Heart right ventricle (tissue), 16 donors: ENCODE measurements at regions of chr2 and their contacts with region 1.

Region 1: DNA sequence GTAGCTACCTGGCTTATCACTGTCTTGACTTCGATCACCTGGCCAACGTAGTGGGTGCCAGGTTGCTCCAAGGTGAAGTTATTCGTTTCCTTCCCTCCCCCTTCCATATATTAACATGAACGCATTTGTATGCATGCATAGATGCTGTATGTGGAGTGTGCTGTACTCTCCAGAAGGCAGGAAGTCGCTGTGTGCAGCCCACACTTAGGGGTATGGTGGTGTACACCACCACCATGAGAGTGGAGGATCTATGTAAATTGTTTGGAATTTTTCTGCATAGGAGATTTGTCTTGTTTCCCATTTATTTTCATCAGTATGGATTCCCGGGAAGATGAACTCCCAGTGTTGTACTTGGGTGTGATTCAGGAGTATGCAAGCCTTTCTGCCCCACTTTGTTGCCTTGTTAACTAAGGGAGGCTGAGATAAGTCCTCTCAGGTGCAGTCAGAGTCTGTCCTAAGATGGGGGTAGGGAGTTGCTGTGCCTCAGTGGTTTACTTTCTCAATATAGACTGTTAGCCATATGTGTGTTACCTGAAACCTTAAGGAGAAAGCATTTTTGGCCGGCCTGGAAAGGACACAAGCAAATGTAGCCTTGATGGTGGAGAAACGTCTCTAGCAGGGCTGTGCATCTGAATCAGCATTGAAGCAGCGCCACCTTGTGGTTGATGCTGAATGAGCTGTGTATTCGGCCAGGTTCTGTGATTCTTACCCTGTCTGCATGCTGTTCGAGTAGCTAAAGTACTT is 149.8 kb downstream of the TANC1 start:
- DNase-seq: peak; percentile 82 to 92
- ATAC-seq: peak; percentile 79 to 96 (median 88)
- H3K4me3 ChIP-seq: no peak overlapping the region
- H3K27ac ChIP-seq: peak overlapping the region in 8 of 10 donors; percentile 7 to 81 (median 75)
- H3K4me1 ChIP-seq: peaks cover 4 to 64% (median 25%) of the 10 kb centered on the region in 9 donors
- H3K27me3 ChIP-seq: no peaks in the 10 kb centered on the region
- CTCF ChIP-seq: peak; percentile 89 to 95 (median 94)

Region 2: DNA sequence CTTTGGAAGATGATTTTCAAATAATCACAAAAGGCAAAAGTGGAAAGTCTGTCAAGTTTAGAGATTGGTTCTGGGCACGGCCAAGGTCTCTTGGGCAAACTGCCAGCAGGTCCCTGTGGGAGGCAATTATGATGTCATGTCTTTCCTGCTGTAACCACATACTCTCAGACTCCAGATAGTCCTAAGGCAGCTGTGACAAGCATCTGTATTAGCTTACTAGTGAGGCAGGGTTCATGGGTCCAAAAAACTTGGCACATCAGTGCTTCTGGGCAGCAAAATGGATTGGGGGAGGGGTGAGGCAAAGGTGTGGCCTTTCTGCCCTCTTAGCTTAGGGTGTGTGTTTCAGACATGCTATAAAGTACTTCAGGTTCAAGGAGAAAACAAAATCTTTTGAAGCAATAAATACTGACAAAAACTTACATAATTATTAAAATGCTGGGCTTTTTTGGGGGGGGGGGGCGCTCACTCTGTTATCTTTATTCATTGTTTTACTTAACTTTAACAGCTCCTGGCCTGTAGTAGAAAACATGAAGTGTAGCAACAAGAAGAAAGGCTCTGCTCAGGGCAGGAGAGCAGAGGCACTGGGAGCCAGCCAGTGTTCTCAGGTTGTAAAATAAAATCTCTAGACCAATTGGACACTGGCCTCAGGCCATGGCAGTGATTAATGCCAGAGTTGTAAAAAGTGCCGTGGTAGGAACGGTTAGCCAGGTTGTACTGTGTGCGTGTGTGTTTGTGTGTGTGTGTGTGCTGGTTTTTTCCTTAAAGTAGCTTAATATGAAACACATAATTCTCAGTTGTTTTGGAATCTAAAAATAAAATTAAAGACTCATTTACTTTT is 164.1 kb before region 1 on chr2:
- intact Hi-C with region 1: no loop called
- DNase-seq: peak; percentile 81 to 86
- ATAC-seq: peak; percentile 79 to 95 (median 91)
- H3K4me3 ChIP-seq: no peak overlapping the region
- H3K27ac ChIP-seq: peak overlapping the region in 9 of 10 donors; percentile 1 to 77 (median 59)
- H3K4me1 ChIP-seq: peaks cover 6 to 33% (median 24%) of the 10 kb centered on the region in 9 donors
- H3K27me3 ChIP-seq: no peaks in the 10 kb centered on the region
- CTCF ChIP-seq: no peak

Region 3: DNA sequence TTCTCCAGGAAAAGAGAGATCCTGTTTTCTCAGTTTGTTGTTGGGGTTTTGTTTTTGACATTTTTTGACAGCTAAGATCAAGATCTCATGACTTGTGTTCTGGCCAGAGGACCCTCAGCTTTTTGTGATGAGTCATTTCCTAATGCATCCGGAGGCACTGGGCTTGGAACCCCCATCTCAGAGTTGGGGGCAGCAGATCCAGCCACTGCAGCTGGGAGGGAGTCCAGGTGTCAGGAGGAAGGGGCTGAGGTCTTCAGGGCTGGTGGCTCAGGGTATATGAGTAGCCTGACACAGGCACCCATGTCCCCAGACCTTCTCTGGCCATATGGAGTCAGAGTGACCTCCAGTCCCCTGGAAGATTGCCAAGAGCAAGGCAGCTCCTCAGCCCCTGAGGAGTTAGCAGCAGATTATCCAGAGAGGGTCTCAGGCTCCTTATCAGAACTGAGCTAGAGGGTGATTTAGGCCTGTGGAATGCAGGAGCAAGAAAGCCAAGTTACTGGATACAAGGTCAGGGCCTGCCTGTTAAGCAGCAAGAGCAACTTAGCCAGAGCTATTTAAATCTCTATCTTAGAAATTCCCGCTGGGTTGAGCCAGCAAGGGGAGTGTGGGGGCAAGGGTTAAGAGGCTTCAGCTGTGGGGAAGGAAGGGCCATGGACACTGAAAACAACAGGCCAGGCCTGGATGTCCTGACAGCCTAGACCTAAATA is 87.5 kb before region 1 on chr2:
- intact Hi-C with region 1: loop called in 5 of 10 experiments (anchors 5 kb)
- DNase-seq: peak; percentile 43 to 76
- ATAC-seq: peak; percentile 81 to 92 (median 88)
- H3K4me3 ChIP-seq: no peak overlapping the region
- H3K27ac ChIP-seq: peak overlapping the region; percentile 59 to 89 (median 82)
- H3K4me1 ChIP-seq: peaks cover 22 to 82% (median 63%) of the 10 kb centered on the region in 9 donors
- H3K27me3 ChIP-seq: no peaks in the 10 kb centered on the region
- CTCF ChIP-seq: no peak

Region 4: GRCh38 chr2:159044804-159045286 is 73.4 kb before region 1 on chr2:
- intact Hi-C with region 1: loop called in 3 of 10 experiments (anchors 5 to 10 kb)
- DNase-seq: no peak
- ATAC-seq: peak in 5 of 8 donors; percentile 41 to 58 (median 50)
- H3K4me3 ChIP-seq: no peak overlapping the region
- H3K27ac ChIP-seq: peak overlapping the region in 8 of 10 donors; percentile 17 to 74 (median 56)
- H3K4me1 ChIP-seq: peaks cover 6 to 87% (median 49%) of the 10 kb centered on the region in 9 donors
- H3K27me3 ChIP-seq: no peaks in the 10 kb centered on the region
- CTCF ChIP-seq: no peak

Region 5: DNA sequence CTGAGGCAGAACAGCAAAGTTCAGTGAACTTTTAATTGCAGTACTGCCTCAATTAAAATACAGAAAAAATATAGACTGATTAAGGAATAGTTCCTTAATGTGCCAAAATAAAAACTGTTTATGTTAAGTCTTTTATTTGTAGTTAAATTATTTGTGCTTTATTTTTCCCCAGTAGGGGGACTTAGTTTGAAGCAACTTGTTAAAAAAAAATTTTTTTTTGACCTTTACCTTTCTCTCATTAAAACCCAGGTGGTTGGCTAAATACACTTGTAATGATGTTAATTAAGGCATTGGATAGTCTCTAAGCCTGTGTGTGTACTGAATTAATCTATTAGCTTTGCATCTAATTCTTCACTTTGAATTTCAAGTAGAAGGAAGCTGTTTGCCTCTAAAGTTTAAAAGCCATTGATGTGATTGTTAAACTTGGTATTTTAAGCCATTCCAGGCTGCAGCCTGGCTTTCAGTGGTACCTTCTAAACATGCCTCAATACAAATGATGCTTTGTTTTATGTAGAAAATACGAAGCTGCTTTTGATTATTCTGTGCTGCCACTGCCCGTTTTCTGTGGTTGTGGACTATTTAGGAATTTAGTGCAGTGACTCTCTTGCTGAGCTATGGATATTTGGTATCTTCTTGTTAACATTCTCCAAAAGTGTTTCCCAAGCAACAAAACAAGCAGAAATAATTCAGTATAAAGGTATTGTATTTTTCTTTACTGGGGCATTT is 46.9 kb before region 1 on chr2:
- intact Hi-C with region 1: loop called in 1 of 10 experiments (anchors 5 kb)
- DNase-seq: no peak
- ATAC-seq: no peak
- H3K4me3 ChIP-seq: no peak overlapping the region
- H3K27ac ChIP-seq: no peak overlapping the region
- H3K4me1 ChIP-seq: peaks cover 3 to 58% (median 29%) of the 10 kb centered on the region in 9 donors
- H3K27me3 ChIP-seq: no peaks in the 10 kb centered on the region
- CTCF ChIP-seq: peak in 1 of 9 donors; percentile 6

Region 6: GRCh38 chr2:159326569-159327255 is 208.4 kb after region 1 on chr2:
- intact Hi-C with region 1: no loop called
- DNase-seq: no peak
- ATAC-seq: peak in 2 of 8 donors; percentile 44 to 68
- H3K4me3 ChIP-seq: no peak overlapping the region
- H3K27ac ChIP-seq: peak overlapping the region in 1 of 10 donors; percentile 54
- H3K4me1 ChIP-seq: peaks cover 0 to 10% (median 0%) of the 10 kb centered on the region in 9 donors
- H3K27me3 ChIP-seq: no peaks in the 10 kb centered on the region
- CTCF ChIP-seq: no peak